ENCODE measurements at regions of chr17 and their contacts with region 1.

Region 1: GRCh38 chr17:8138672-8139371 is 13.4 kb downstream of the PER1 start:
- DNase-seq: peak; percentile 87 to 99 (median 97)
- ATAC-seq: peak; percentile 86 to 87
- H3K4me3 Mint-ChIP-seq: no peak overlapping the region
- H3K27ac Mint-ChIP-seq: no peak overlapping the region
- H3K4me1 Mint-ChIP-seq: peaks cover 0 to 18% (median 7%) of the 10 kb centered on the region in 4 donors
- H3K27me3 Mint-ChIP-seq: peaks cover 0 to 5% (median 0%) of the 10 kb centered on the region in 5 donors

Region 2: GRCh38 chr17:8044819-8045810 is 93.7 kb before region 1 on chr17:
- POLR2A ChIA-PET with region 1: no interaction called
- DNase-seq: no peak
- ATAC-seq: no peak
- H3K4me3 Mint-ChIP-seq: no peak overlapping the region
- H3K27ac Mint-ChIP-seq: peak overlapping the region in 1 of 10 donors; percentile 62
- H3K4me1 Mint-ChIP-seq: peaks cover 0 to 5% (median 2%) of the 10 kb centered on the region in 4 donors
- H3K27me3 Mint-ChIP-seq: peaks cover 4 to 17% (median 7%) of the 10 kb centered on the region in 5 donors

Region 3: DNA sequence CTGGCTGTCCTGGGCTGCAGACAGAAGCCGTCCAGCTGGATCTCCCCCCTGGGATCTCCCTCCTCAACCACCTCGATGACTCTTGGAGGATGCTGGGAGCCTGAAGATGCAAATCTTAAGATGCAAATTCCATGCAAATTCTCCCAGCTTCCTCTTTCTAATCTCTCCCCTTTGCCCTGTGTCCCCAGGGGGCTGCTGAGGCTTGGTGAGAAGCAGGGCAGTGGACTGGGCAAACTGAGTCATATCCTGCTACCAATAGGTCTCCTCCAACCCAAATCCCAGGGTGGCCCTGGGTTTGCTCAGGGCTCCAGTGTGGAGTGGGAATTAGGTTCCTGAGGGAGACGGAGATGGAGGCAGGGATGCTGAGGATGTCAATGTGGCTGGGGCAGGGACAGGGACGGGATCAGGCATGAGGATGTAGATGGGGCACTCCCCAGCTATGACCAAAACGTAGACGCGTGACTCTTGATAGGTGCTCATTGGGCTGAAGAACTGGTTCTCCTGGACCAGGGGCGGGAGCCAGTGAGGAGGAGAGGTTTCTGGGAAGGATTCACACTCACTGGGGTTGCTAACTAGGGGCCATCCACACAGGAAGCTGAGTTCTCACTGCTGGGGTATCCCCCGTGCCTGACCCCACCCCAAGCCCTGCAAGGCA is 47.7 kb before region 1 on chr17:
- POLR2A ChIA-PET with region 1: no interaction called
- DNase-seq: no peak
- ATAC-seq: no peak
- H3K4me3 Mint-ChIP-seq: peak overlapping the region in 1 of 10 donors; percentile 47
- H3K27ac Mint-ChIP-seq: peak overlapping the region in 2 of 10 donors; percentile 21 to 24
- H3K4me1 Mint-ChIP-seq: peaks cover 6 to 19% (median 12%) of the 10 kb centered on the region in 4 donors
- H3K27me3 Mint-ChIP-seq: peaks cover 16 to 46% (median 21%) of the 10 kb centered on the region in 5 donors

Region 4: DNA sequence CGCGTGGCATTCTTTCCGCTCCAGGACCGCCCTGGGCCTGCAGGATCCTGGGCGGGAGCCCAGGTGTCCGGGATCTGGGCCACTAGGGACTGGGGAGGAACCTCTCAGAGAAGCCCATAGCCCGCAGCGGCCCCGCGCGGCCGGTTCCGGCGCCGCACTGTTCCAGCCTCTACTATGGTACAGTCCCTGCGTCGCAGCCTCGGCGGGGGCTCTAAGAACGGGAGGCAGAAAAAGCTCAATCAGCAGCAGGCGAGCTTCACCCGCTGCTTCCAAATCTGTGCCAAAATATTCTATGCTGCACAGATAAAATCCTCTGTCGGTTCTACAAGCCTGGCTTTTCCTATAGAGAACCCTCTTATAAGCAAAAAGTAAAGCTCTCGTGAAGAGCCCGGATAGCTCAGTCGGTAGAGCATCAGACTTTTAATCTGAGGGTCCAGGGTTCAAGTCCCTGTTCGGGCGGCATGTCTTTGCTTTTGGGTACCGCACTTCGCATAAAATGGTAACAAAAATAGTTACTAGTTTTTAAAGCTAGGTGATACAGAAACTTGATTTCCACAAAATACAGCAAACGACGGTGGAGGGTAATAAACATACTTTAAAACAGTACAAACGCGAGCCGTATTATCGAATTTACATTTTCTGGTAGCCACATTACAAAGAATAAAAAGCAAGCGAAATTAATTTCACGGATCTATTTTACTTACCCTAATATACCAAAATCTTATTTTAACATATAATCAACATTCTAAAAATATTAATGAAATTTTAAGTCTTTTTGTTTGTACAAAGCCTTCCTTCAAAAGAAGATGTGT is 19.8 kb before region 1 on chr17:
- POLR2A ChIA-PET with region 1: interaction called, 34 read pairs
- DNase-seq: peak; percentile 78 to 98 (median 85)
- ATAC-seq: peak; percentile 64 to 71
- H3K4me3 Mint-ChIP-seq: peak overlapping the region; percentile 92 to 98 (median 94)
- H3K27ac Mint-ChIP-seq: peak overlapping the region; percentile 91 to 100 (median 97)
- H3K4me1 Mint-ChIP-seq: peaks cover 46 to 61% (median 56%) of the 10 kb centered on the region in 4 donors
- H3K27me3 Mint-ChIP-seq: peaks cover 15 to 55% (median 38%) of the 10 kb centered on the region in 5 donors

Region 5: DNA sequence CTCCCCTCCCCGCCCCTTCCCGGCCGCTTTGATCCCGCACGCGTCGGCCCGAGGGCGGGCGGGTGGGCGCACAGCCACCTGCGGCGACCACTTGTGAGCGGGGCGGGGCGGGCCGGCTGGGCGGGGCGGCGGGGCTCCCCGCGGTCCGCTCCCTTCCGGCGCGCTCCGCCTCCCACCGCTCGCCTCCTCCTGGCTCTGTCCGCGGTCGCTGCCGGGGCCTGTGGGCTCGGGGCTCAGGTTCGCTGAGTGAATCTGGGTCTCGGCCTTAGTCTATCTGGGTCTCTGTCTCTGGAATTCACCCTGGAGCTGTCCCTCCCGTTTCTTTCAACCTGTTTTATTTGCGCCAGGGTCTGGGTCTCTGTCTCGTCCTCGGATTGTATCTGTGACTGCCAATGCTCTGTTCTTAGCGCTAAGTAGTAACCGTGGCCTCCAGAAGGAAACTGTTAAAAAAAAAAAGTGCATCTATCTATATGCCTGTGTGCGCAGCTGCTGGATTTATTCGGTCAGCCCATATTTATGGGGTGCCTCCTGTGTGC is 12.2 kb before region 1 on chr17:
- POLR2A ChIA-PET with region 1: interaction called, 15 read pairs
- DNase-seq: peak in 7 of 10 donors; percentile 31 to 61 (median 45)
- ATAC-seq: peak; percentile 37 to 39
- H3K4me3 Mint-ChIP-seq: peak overlapping the region; percentile 91 to 97 (median 94)
- H3K27ac Mint-ChIP-seq: peak overlapping the region; percentile 69 to 100 (median 76)
- H3K4me1 Mint-ChIP-seq: peaks cover 35 to 53% (median 46%) of the 10 kb centered on the region in 4 donors
- H3K27me3 Mint-ChIP-seq: peaks cover 0 to 35% (median 21%) of the 10 kb centered on the region in 5 donors

Region 6: GRCh38 chr17:8156246-8156992 is 17.6 kb after region 1 on chr17:
- POLR2A ChIA-PET with region 1: interaction called, 188 read pairs
- DNase-seq: peak; percentile 97 to 100 (median 100)
- ATAC-seq: peak; percentile 67 to 71
- H3K4me3 Mint-ChIP-seq: no peak overlapping the region
- H3K27ac Mint-ChIP-seq: no peak overlapping the region
- H3K4me1 Mint-ChIP-seq: peaks cover 31 to 70% (median 54%) of the 10 kb centered on the region in 4 donors
- H3K27me3 Mint-ChIP-seq: peaks cover 0 to 2% (median 0%) of the 10 kb centered on the region in 5 donors

Region 7: GRCh38 chr17:8162233-8162996 is 23.6 kb after region 1 on chr17 and contains the start of gene VAMP2:
- POLR2A ChIA-PET with region 1: interaction called, 188 read pairs
- DNase-seq: peak; percentile 75 to 92 (median 87)
- ATAC-seq: peak; percentile 61 to 66
- H3K4me3 Mint-ChIP-seq: peak within 1 kb of the TSS; percentile 86 to 96 (median 90)
- H3K27ac Mint-ChIP-seq: peak within 1 kb of the TSS; percentile 95 to 99 (median 98)
- H3K4me1 Mint-ChIP-seq: peaks cover 31 to 65% (median 64%) of the 10 kb centered on the region in 4 donors
- H3K27me3 Mint-ChIP-seq: no peaks in the 10 kb centered on the region
- polyA plus RNA-seq, gene VAMP2: 50.4 to 84.2 (median 64.4) TPM

Region 8: GRCh38 chr17:8189711-8190477 is 51.1 kb after region 1 on chr17 and contains the start of gene BORCS6:
- POLR2A ChIA-PET with region 1: interaction called, 1,171 read pairs
- DNase-seq: peak; percentile 83 to 98 (median 94)
- ATAC-seq: peak; percentile 67 to 71
- H3K4me3 Mint-ChIP-seq: peak within 1 kb of the TSS in 3 of 10 donors; percentile 3 to 51 (median 39)
- H3K27ac Mint-ChIP-seq: peak within 1 kb of the TSS in 8 of 10 donors; percentile 69 to 94 (median 92)
- H3K4me1 Mint-ChIP-seq: peaks cover 6 to 13% (median 12%) of the 10 kb centered on the region in 4 donors
- H3K27me3 Mint-ChIP-seq: no peaks in the 10 kb centered on the region
- polyA plus RNA-seq, gene BORCS6: 16.1 to 22.6 (median 16.9) TPM

Region 9: GRCh38 chr17:8294814-8295316 is 156.0 kb after region 1 on chr17:
- POLR2A ChIA-PET with region 1: interaction called, 12 read pairs
- DNase-seq: no peak
- ATAC-seq: no peak
- H3K4me3 Mint-ChIP-seq: peak overlapping the region; percentile 88 to 97 (median 94)
- H3K27ac Mint-ChIP-seq: peak overlapping the region; percentile 84 to 97 (median 95)
- H3K4me1 Mint-ChIP-seq: peaks cover 20 to 39% (median 31%) of the 10 kb centered on the region in 4 donors
- H3K27me3 Mint-ChIP-seq: no peaks in the 10 kb centered on the region